ENCODE measurements at regions of chrX and their contacts with region 1.

Region 1: GRCh38 chrX:10119399-10119990 is 37.3 kb upstream of the CLCN4 start:
- DNase-seq: peak; percentile 56 to 72
- H3K4me3 ChIP-seq: no peak overlapping the region
- H3K27ac ChIP-seq: no peak overlapping the region
- H3K4me1 ChIP-seq: no peaks in the 10 kb centered on the region
- H3K27me3 ChIP-seq: peaks cover 0 to 6% of the 10 kb centered on the region in 2 donors
- CTCF ChIP-seq: peak; percentile 100
- POLR2A ChIP-seq: no peak

Region 2: GRCh38 chrX:9196961-9197640 is 922.4 kb before region 1 on chrX:
- intact Hi-C with region 1: no loop called
- DNase-seq: no peak
- H3K4me3 ChIP-seq: no peak overlapping the region
- H3K27ac ChIP-seq: no peak overlapping the region
- H3K4me1 ChIP-seq: no peaks in the 10 kb centered on the region
- H3K27me3 ChIP-seq: peaks cover 0 to 11% of the 10 kb centered on the region in 2 donors
- CTCF ChIP-seq: no peak
- POLR2A ChIP-seq: no peak

Region 3: DNA sequence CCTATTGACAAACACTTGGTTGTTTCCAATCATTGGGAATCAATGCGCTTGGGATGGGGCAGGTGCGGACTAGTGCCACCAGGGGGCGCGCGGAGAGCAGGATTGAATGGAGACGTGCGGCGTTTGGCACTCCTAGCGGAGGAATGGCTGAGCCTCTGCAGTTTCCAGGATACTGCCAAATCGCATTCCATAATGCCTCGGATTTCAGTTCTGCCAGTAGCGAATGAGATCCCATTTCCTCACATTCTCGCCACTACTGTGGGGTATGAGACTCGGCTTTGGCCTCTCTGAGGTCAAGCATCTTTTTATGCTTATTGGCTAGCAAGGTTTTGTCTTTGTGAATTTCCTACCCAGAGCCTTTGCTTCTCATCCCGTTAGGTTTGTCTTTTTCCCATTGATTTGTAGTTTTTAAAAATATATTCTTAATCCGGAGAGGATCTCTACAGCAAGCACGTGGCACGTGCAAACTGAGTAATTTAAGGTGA is 123.6 kb before region 1 on chrX:
- intact Hi-C with region 1: loop called (anchors 5 kb)
- DNase-seq: peak; percentile 70 to 84
- H3K4me3 ChIP-seq: no peak overlapping the region
- H3K27ac ChIP-seq: no peak overlapping the region
- H3K4me1 ChIP-seq: no peaks in the 10 kb centered on the region
- H3K27me3 ChIP-seq: peaks cover 0 to 10% of the 10 kb centered on the region in 2 donors
- CTCF ChIP-seq: peak; percentile 94 to 98 (median 97)
- POLR2A ChIP-seq: no peak

Region 4: DNA sequence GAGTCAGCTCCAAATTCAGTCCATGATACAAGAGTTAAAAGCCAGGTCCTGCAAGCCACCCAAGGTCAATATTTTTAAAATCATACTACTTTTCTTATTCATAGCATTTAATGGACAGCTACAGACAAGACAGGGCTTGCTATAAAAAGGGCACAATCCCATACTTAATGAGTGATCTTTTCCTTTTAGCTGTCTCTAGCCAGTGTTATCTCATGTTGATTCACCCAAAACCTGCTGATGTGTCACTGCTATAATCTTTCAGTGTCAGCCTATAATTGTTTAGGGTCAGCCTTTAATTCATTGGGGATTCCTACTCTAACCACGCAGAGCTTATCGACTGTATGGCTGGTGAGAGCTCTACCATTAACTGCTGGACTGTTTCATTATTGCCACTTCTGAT is 940.4 kb after region 1 on chrX:
- intact Hi-C with region 1: loop called (anchors 5 kb)
- DNase-seq: no peak
- H3K4me3 ChIP-seq: no peak overlapping the region
- H3K27ac ChIP-seq: no peak overlapping the region
- H3K4me1 ChIP-seq: no peaks in the 10 kb centered on the region
- H3K27me3 ChIP-seq: peaks cover 0 to 4% of the 10 kb centered on the region in 2 donors
- CTCF ChIP-seq: no peak
- POLR2A ChIP-seq: no peak